Left ventricle myocardium inferior (tissue), 1 donor: ENCODE measurements at regions of chr14 and their contacts with region 1.

Region 1: DNA sequence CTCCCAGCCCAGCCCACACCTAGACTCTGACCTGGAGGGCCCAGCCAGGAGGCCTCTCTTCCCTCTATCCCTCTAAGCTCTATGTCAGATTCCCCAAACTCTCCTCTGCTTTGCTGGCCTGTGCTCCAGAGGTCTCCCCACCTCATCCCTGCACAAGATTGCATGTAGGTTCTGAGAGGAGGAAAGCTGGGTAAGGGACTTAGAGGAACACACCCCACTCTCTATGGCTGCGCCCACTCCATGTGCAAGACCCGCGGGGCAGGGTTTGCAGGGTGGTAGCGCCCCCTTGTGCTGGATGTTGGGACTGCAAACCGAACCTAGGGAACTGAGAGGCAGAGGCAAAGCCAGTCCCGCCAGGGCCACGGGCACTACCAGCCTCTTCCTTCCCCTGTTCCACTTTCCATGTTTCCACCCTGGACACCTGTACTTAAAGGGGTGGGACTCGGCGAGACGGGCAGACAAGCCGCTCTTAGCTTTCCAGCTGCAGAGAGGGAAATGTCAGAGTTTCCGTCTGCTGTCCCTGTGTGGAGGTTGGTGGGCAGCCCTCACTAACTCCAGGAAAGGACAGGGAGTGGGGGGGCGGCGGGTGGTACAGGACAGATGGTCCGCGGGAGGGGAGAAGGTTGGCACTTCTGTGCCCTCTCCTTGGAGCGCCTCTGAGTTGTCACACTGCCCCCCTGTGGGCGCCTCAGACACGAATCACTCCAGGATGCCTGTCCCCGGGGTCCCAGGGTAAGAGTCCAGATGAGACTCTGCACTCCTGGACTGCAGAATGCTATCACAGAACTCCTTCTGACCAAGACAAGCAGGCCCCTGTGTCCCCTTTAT is 16.8 kb downstream of the MMP14 start:
- DNase-seq: peak; percentile 90
- H3K4me3 ChIP-seq: peak overlapping the region; percentile 68
- H3K27ac ChIP-seq: peak overlapping the region; percentile 44
- H3K4me1 ChIP-seq: peaks cover 48% of the 10 kb centered on the region
- H3K27me3 ChIP-seq: no peaks in the 10 kb centered on the region
- CTCF ChIP-seq: peak; percentile 87

Region 2: DNA sequence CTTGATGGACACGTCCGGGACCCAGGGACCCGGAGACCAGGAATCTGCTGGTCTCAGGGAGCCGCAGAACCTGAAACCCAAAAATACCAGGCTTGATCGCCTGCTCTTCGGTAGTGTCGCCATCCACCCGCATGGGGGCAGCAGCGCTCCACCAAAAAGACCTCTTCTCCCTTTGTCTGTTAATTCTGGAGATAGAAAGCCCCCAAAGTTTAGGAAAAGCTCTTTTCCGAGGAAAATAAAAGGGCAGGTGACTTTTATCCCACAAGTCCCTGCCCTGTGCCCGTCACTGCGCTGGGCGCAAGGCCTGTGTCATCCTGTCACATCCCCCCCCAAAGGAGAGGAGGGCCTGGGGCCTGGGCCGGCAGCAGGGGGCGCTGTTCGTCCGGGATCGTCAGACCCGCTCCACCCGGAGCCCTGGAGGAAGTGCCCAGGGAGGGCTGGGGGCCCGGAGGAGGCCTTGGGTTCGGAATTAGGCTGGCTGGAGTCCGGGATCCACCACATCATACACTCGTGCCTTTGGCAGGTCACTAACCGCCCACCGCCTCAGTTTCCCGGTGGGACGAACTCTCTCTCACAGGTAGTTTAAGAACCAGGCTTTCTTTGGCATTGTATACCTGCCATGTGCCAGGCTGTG is 296.0 kb before region 1 on chr14:
- intact Hi-C with region 1: loop called (anchors 10 kb)
- DNase-seq: peak; percentile 83
- H3K4me3 ChIP-seq: peak overlapping the region; percentile 49
- H3K27ac ChIP-seq: peak overlapping the region; percentile 59
- H3K4me1 ChIP-seq: peaks cover 44% of the 10 kb centered on the region
- H3K27me3 ChIP-seq: no peaks in the 10 kb centered on the region
- CTCF ChIP-seq: peak; percentile 98

Region 3: GRCh38 chr14:22781586-22781991 is 71.6 kb before region 1 on chr14:
- intact Hi-C with region 1: no loop called
- DNase-seq: no peak
- H3K4me3 ChIP-seq: no peak overlapping the region
- H3K27ac ChIP-seq: no peak overlapping the region
- H3K4me1 ChIP-seq: peaks cover 8% of the 10 kb centered on the region
- H3K27me3 ChIP-seq: no peaks in the 10 kb centered on the region
- CTCF ChIP-seq: no peak

Region 4: GRCh38 chr14:22819151-22819988 is 33.8 kb before region 1 on chr14:
- intact Hi-C with region 1: loop called (anchors 5 kb)
- DNase-seq: peak; percentile 55
- H3K4me3 ChIP-seq: peak overlapping the region; percentile 55
- H3K27ac ChIP-seq: peak overlapping the region; percentile 63
- H3K4me1 ChIP-seq: peaks cover 45% of the 10 kb centered on the region
- H3K27me3 ChIP-seq: no peaks in the 10 kb centered on the region
- CTCF ChIP-seq: no peak